Sigmoid colon (tissue), 7 donors: ENCODE measurements at regions of chr5 and their contacts with region 1.

Region 1: DNA sequence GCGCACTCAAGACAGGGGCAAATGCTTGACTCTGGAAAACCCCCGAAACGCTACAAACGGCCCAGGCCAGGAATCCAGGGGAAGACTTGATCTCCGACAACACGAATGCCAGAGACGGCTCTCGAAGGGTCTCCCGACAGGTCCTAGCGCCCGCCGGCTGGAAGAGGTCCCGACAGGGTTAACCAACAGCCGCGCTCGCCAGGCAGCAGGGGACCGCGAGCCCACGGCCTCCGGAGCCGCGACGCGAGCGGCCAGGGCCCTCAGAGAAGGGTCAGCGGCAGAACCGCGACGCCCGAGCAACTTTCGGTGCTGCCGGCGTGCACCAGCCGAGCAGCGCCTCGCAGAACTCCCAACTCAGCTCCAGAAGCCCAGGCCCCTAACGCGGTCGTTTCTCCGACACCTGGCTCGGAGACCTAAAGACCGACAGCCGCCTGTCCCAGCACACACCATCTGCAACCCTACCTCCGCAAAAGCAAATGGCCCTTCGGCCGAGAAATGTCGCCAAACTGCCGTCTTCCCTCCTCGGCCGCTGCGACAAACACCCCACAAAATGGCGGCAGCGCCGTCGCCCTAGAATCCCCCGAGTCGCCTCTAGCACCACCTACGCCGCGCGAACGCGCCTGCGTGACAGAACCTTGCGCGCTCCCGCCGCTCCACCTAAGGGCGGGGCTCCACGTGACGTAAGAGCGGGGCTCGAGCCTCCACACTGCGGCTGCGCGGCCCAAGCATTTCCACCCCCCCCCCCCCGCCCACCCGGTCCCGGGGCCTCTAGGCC is at the start of gene CLK4:
- DNase-seq: peak; percentile 98
- H3K4me3 ChIP-seq: peak within 1 kb of the TSS; percentile 62 to 95 (median 88)
- H3K27ac ChIP-seq: peak within 1 kb of the TSS; percentile 91 to 99 (median 98)
- H3K4me1 ChIP-seq: peaks cover 0 to 35% (median 31%) of the 10 kb centered on the region in 4 donors
- H3K27me3 ChIP-seq: no peaks in the 10 kb centered on the region
- CTCF ChIP-seq: no peak
- EP300 ChIP-seq: peak in 1 of 4 donors; percentile 3
- POLR2A ChIP-seq: peak; percentile 17 to 44
- total RNA-seq, gene CLK4: 31.8 to 51.8 (median 40.3) TPM

Region 2: GRCh38 chr5:177478711-177479646 is 1147.7 kb before region 1 on chr5:
- intact Hi-C with region 1: no loop called
- DNase-seq: peak; percentile 97
- H3K4me3 ChIP-seq: no peak overlapping the region
- H3K27ac ChIP-seq: peak overlapping the region; percentile 95 to 99 (median 96)
- H3K4me1 ChIP-seq: peaks cover 0 to 98% (median 96%) of the 10 kb centered on the region in 4 donors
- H3K27me3 ChIP-seq: no peaks in the 10 kb centered on the region
- CTCF ChIP-seq: no peak
- EP300 ChIP-seq: peak in 1 of 4 donors; percentile 39
- POLR2A ChIP-seq: no peak

Region 3: DNA sequence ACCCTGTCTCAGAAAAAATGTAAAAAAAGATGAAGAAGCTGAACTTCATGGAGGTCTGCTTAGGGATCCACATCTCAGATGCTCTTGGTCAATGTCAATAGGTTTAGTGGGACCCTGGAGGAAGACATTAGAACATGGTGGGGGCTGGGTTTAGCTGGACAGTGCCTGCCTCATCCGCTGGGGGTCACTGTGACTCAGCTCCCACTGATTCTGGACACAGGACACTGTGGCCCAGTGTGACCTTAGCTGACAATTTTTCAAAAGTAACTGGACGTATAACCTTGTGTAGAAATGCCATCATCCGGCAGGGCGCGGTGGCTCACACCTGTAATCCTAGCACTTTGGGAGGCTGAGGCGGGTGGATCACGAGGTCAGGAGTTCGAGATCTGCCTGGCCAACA is 429.7 kb before region 1 on chr5:
- intact Hi-C with region 1: no loop called
- DNase-seq: peak; percentile 32
- H3K4me3 ChIP-seq: no peak overlapping the region
- H3K27ac ChIP-seq: no peak overlapping the region
- H3K4me1 ChIP-seq: no peaks in the 10 kb centered on the region
- H3K27me3 ChIP-seq: no peaks in the 10 kb centered on the region
- CTCF ChIP-seq: no peak
- EP300 ChIP-seq: no peak
- POLR2A ChIP-seq: no peak

Region 4: DNA sequence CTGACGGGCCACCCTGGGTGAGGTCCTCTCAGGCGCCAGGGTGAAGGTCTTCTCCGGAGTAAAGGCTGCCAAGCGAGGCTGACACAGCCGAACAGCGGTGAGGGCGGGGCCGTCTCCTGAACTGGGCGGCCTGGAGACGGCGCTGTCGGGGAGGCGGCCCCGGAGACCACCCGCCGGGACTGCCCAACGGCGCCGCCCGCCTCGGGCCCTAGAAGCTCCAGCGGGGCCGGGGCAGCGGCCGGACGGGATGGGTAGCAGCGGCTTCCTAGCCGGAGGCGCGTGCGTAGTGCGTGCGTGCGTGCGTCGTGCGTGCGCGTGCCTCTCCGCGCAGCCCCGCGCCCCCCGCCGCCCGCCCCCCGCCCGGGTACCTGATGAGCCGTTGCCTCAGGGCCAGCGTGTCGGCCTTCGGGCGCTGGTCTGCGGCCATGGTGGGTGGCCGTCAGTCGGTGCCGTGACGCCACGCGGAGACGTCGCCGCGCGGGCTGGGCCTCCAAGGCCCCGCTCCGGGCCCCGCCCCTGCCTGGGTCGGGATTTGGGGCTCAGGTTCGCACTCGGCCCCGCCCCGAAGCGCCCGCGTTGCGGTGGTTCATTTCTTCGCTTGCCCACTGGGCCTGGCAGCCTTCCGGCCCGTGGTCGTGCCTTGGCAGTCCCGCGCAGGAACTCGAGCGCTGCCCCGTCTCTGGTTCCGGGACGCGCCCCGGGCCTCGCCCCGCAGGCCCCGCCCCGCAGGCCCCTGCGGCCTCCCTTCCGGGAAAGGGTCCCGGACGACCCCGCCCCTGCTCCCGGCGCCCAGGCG is 394.3 kb before region 1 on chr5 and contains the start of gene PHYKPL:
- intact Hi-C with region 1: loop called (anchors 2 kb)
- DNase-seq: peak; percentile 86
- H3K4me3 ChIP-seq: peak within 1 kb of the TSS; percentile 65 to 92 (median 80)
- H3K27ac ChIP-seq: peak within 1 kb of the TSS; percentile 87 to 97 (median 96)
- H3K4me1 ChIP-seq: peaks cover 0 to 29% (median 27%) of the 10 kb centered on the region in 4 donors
- H3K27me3 ChIP-seq: no peaks in the 10 kb centered on the region
- CTCF ChIP-seq: no peak
- EP300 ChIP-seq: no peak
- POLR2A ChIP-seq: no peak
- total RNA-seq, gene PHYKPL: 26.0 to 66.5 (median 41.6) TPM

Region 5: DNA sequence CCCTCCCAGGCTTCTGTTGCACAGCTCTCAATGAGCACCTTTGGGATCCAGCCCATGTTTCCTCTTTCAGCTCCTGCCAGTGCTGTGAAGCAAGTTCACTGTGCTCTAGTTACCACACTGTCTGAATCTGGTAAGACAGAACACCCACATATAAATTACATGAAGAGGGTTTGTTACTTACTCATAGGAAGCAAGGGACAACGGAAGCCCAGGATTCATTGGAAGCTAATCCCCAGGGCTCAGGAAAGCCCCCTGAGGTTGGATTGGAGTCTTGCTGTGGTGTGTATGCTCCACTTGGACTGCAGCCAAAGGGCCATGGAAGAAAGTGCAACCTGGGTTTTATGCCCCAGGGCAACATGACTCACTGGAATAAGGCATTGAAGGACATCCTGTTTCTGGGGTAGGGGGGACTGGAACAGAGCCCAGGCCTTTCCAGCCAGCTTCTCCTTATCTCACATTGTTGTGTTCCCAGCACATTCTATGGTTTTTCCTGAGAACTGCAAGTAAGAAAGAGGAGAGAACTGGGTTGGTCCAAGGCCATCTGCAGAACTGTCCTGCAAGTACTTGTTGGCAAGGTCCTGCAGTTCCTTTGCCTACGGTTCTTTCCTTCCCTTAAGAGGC is 15.8 kb after region 1 on chr5:
- intact Hi-C with region 1: no loop called
- DNase-seq: no peak
- H3K4me3 ChIP-seq: no peak overlapping the region
- H3K27ac ChIP-seq: no peak overlapping the region
- H3K4me1 ChIP-seq: no peaks in the 10 kb centered on the region
- H3K27me3 ChIP-seq: no peaks in the 10 kb centered on the region
- CTCF ChIP-seq: no peak
- EP300 ChIP-seq: no peak
- POLR2A ChIP-seq: no peak

Region 6: DNA sequence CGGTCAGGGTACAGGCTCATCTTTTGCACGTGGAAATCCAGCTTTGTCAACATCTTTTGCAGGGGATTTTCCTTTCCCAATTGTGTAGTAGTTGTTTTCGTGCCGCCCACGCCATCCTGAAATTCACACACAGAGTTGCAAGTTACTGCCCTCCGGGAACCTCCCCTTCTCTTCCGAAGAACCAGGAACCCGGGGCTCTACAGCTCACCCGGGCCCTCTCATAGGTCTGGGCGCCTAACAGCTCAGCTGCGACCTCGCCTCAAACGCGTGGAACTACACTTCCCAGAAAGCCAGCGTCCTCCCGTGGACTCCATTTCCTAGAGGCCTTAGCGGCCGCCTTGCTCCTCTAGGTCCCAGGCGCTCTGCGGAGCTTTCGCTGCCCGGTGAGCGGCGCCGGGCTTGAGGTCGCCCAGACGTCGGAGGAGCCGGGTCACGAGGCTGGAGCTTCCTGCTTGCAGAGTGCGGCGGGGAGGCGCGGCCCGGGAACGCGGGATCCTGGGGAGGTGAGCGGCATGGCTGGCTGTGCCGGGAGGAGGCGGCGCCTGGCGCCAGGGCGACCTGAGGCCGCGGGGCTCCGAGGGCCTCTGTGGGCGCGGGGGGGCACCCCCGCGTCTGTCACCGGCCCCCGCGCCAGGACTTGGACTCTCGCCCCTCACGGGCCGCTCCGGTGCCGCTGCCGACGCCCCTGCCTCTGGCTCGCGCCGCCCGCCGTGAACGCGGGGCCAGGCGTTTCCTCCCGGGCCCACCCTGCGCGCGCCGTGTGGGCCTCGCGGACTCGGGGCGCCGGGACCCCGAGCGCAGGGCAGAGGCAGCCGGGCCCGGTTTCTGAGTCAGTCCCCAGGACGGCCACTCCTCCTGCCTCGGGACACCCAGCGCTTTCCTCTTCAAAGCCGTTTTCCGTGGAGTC is 233.2 kb after region 1 on chr5 and contains the start of gene ZNF354B:
- intact Hi-C with region 1: loop called (anchors 5 kb)
- DNase-seq: peak; percentile 94
- H3K4me3 ChIP-seq: peak within 1 kb of the TSS; percentile 63 to 98 (median 78)
- H3K27ac ChIP-seq: peak within 1 kb of the TSS; percentile 86 to 92 (median 87)
- H3K4me1 ChIP-seq: peaks cover 0 to 21% (median 14%) of the 10 kb centered on the region in 4 donors
- H3K27me3 ChIP-seq: no peaks in the 10 kb centered on the region
- CTCF ChIP-seq: no peak
- EP300 ChIP-seq: no peak
- POLR2A ChIP-seq: peak; percentile 34 to 42
- total RNA-seq, gene ZNF354B: 13.3 to 23.5 (median 18.6) TPM

Region 7: GRCh38 chr5:178872302-178872701 is 245.6 kb after region 1 on chr5:
- intact Hi-C with region 1: no loop called
- DNase-seq: no peak
- H3K4me3 ChIP-seq: no peak overlapping the region
- H3K27ac ChIP-seq: no peak overlapping the region
- H3K4me1 ChIP-seq: no peaks in the 10 kb centered on the region
- H3K27me3 ChIP-seq: no peaks in the 10 kb centered on the region
- CTCF ChIP-seq: no peak
- EP300 ChIP-seq: no peak
- POLR2A ChIP-seq: no peak

Region 8: DNA sequence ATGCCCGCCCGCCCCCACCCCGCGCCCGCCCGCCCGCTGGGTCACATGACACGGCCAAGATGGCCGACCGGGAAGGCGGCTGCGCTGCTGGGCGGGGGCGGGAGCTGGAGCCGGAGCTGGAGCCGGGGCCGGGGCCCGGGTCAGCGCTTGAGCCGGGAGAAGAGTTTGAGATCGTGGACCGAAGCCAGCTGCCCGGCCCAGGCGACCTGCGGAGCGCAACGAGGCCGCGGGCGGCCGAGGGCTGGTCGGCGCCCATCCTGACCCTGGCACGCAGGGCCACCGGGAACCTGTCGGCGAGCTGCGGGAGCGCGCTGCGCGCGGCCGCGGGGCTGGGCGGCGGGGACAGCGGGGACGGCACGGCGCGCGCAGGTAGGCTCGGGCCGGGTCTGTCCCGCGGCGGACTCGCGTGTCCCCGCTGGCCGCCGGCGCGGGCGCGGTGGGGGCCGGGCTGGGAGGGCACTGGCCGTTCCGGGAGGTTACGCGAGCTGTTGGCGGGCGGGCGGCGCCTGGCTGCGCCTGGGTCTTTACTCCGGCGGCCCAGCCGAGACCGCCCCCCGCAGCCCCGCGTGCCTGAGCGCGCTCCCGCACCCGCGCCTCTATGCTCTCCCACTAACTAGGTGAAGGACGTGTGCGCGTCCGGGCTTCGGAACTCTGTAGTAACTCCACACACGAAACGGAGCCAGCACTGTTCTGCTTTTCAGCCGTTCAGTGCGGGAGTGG is 924.0 kb after region 1 on chr5 and contains the start of gene RUFY1:
- intact Hi-C with region 1: loop called (anchors 2 kb)
- DNase-seq: peak; percentile 89
- H3K4me3 ChIP-seq: peak within 1 kb of the TSS; percentile 79 to 94 (median 86)
- H3K27ac ChIP-seq: peak within 1 kb of the TSS; percentile 95 to 100 (median 96)
- H3K4me1 ChIP-seq: peaks cover 0 to 40% (median 33%) of the 10 kb centered on the region in 4 donors
- H3K27me3 ChIP-seq: no peaks in the 10 kb centered on the region
- CTCF ChIP-seq: no peak
- EP300 ChIP-seq: no peak
- POLR2A ChIP-seq: peak; percentile 59 to 66
- total RNA-seq, gene RUFY1: 29.8 to 79.8 (median 45.9) TPM